Right cardiac atrium (tissue), 5 donors: ENCODE measurements at regions of chr11 and their contacts with region 1.

Region 1: DNA sequence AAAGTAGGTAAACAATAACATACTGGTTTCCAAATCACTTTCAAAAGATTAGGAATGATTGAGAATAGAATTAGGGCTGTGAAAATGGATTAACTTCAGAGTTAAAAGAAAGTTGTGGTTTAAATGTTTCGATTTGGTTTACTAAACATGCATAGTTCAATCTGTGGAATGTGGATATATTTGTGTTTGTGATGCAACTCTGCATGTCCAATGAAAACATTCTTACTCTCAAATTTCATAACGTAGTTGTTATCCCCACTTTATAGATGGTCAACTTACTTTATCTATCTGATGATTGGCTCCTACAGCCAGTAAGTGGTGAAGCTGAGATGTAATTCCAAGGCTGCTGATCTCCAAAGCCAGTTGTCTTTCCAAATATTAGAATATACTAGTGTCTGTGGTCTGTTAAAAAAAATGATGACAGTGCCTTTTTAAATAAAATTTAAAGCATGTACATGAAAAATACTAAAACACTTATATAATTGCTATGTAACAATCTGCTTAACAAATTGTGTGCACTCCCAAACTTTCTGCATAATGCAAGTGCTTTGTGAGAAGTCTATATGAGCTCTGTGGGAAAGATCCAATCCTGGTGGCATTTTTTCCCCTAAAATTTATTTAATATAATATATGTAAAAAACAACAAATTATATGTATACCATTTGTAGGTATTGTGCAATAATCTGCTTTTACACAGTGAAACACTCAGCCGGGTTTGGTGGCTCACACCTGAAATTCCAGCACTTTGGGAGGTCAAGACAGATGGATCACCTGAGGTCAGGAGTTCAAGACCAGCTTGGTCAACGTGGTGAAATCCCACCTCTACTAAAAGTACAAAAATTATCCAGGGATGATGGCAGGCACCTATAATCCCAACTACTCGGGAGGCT is 9.7 kb upstream of the SIK3 start:
- DNase-seq: no peak
- ATAC-seq: no peak
- H3K4me3 ChIP-seq: no peak overlapping the region
- H3K27ac ChIP-seq: no peak overlapping the region
- H3K4me1 ChIP-seq: no peaks in the 10 kb centered on the region
- H3K27me3 ChIP-seq: no peaks in the 10 kb centered on the region

Region 2: GRCh38 chr11:116791002-116791812 is 316.7 kb before region 1 on chr11:
- intact Hi-C with region 1: loop called (anchors 2 to 5 kb)
- DNase-seq: peak; percentile 79 to 92 (median 92)
- ATAC-seq: peak; percentile 70
- H3K4me3 ChIP-seq: no peak overlapping the region
- H3K27ac ChIP-seq: no peak overlapping the region
- H3K4me1 ChIP-seq: peaks cover 3% of the 10 kb centered on the region
- H3K27me3 ChIP-seq: no peaks in the 10 kb centered on the region

Region 3: GRCh38 chr11:116797816-116798215 is 310.1 kb before region 1 on chr11:
- intact Hi-C with region 1: loop called in 3 of 4 experiments (anchors 5 kb)
- DNase-seq: no peak
- ATAC-seq: peak in 1 of 2 donors; percentile 32
- H3K4me3 ChIP-seq: no peak overlapping the region
- H3K27ac ChIP-seq: no peak overlapping the region
- H3K4me1 ChIP-seq: no peaks in the 10 kb centered on the region
- H3K27me3 ChIP-seq: peaks cover 2% of the 10 kb centered on the region

Region 4: GRCh38 chr11:116879800-116880625 is 227.9 kb before region 1 on chr11:
- intact Hi-C with region 1: loop called (anchors 5 kb)
- DNase-seq: no peak
- ATAC-seq: peak; percentile 86 to 90
- H3K4me3 ChIP-seq: no peak overlapping the region
- H3K27ac ChIP-seq: no peak overlapping the region
- H3K4me1 ChIP-seq: peaks cover 4% of the 10 kb centered on the region
- H3K27me3 ChIP-seq: no peaks in the 10 kb centered on the region